ENCODE measurements at regions of chr1 and their contacts with region 1.

Region 1: DNA sequence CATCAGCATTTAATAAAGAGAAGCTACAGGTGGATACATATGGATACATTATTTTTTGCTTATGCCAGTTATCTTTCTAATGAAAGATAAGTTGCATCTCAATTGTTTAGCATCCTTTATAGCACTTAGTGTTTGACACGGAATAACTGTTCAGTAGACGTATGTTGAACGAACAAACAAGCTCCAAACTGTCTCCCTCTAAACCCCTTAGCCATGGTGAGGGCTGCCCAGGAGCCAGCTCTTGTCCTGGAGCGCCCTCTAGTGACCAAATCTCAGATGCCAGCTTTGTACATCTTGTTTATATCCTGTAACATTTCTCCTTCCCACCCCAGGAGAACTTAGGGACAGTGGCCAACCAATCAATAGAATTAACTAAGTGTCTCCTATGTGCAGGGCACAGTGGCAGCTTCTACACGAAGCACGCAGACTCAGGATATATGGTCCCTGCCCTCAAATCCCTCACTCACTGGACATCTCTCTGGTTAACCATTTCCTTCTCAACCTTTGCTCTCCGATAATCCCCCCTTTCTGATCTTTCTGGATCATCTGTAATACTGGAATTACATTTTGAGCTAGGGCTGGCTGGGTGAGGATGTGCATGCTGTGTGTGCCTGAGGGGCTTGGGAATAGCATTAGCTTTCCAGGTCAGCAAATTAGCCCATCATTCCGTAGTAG is 22.9 kb downstream of the KCNA10 start:
- DNase-seq: peak; percentile 68
- ATAC-seq: peak; percentile 94
- H3K4me3 ChIP-seq: no peak overlapping the region
- H3K27ac ChIP-seq: no peak overlapping the region
- H3K4me1 ChIP-seq: no peaks in the 10 kb centered on the region; a peak in 1 of 4 replicates
- H3K27me3 ChIP-seq: no peaks in the 10 kb centered on the region
- CTCF ChIP-seq: peak; percentile 87 to 97 (median 95)
- POLR2A ChIP-seq: no peak
- RAD21 ChIP-seq: peak; percentile 99

Region 2: GRCh38 chr1:110196917-110197765 is 298.9 kb before region 1 on chr1:
- CTCF ChIA-PET with region 1: interaction called, 23 read pairs
- POLR2A ChIA-PET with region 1: no interaction called
- RAD21 ChIA-PET with region 1: interaction called, 5 to 8 read pairs
- intact Hi-C with region 1: no loop called
- DNase-seq: peak; percentile 38
- ATAC-seq: peak; percentile 96
- H3K4me3 ChIP-seq: no peak overlapping the region
- H3K27ac ChIP-seq: no peak overlapping the region
- H3K4me1 ChIP-seq: peaks cover 0 to 6% of the 10 kb centered on the region in 2 experiments; a peak in 1 of 4 replicates
- H3K27me3 ChIP-seq: no peaks in the 10 kb centered on the region
- CTCF ChIP-seq: peak; percentile 69 to 95 (median 93)
- POLR2A ChIP-seq: no peak
- RAD21 ChIP-seq: peak; percentile 70

Region 3: DNA sequence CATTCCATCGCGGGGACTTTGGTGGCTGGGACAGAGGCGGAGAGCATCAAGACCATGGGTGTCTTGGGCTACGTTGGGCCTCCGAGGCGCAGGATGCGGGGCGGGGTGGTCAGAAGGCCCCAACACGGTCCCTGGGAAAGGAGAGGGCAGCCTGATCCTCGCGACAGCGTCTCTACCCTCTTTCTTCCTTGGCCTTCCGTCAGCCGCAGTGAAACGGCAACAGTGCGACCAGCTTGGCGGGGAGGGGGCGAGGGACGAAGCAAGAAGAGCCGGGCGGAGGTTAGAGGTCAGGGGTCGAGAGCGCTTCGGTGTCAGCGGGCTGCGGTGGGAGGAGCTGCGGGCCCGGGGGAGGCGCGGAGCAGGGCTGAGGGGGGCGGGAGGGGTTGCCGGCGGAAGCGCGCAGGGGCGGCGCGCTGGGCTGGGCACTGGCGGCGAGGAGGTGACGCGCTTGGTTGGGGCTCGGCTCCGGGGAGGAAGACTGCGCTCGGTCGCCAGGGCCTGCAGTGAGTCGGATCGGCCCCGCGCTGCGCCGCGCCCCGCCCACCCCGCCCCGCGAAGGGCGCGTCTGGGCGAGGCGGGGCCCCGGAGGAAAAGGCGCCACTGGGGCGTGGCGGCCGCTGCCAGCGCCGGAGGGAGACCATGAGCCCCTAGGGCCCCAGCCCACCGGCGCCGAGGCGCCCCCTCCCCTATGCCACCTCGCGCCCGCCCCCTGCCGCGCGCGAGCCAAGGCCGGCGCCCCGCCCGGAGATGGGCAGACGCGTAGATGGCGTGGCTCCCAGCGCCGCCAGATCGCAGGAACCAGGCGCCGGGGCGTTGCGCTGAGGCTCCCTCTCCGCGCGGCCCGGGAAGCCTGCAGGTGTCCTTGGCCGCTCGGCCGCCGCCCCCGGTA is 286.1 kb before region 1 on chr1 and contains the start of gene KCNC4:
- CTCF ChIA-PET with region 1: interaction called, 91 read pairs
- POLR2A ChIA-PET with region 1: interaction called, 9 read pairs
- RAD21 ChIA-PET with region 1: interaction called, 14 to 17 read pairs
- intact Hi-C with region 1: loop called (anchors 1 kb)
- DNase-seq: peak; percentile 56
- ATAC-seq: peak; percentile 90
- H3K4me3 ChIP-seq: peak within 1 kb of the TSS; percentile 57 to 74
- H3K27ac ChIP-seq: peak within 1 kb of the TSS; percentile 83
- H3K4me1 ChIP-seq: peaks cover 0 to 23% of the 10 kb centered on the region in 2 experiments; a peak in 2 of 4 replicates
- H3K27me3 ChIP-seq: no peaks in the 10 kb centered on the region
- CTCF ChIP-seq: no peak
- POLR2A ChIP-seq: no peak
- RAD21 ChIP-seq: no peak
- total RNA-seq, gene KCNC4: 13.0 TPM

Region 4: DNA sequence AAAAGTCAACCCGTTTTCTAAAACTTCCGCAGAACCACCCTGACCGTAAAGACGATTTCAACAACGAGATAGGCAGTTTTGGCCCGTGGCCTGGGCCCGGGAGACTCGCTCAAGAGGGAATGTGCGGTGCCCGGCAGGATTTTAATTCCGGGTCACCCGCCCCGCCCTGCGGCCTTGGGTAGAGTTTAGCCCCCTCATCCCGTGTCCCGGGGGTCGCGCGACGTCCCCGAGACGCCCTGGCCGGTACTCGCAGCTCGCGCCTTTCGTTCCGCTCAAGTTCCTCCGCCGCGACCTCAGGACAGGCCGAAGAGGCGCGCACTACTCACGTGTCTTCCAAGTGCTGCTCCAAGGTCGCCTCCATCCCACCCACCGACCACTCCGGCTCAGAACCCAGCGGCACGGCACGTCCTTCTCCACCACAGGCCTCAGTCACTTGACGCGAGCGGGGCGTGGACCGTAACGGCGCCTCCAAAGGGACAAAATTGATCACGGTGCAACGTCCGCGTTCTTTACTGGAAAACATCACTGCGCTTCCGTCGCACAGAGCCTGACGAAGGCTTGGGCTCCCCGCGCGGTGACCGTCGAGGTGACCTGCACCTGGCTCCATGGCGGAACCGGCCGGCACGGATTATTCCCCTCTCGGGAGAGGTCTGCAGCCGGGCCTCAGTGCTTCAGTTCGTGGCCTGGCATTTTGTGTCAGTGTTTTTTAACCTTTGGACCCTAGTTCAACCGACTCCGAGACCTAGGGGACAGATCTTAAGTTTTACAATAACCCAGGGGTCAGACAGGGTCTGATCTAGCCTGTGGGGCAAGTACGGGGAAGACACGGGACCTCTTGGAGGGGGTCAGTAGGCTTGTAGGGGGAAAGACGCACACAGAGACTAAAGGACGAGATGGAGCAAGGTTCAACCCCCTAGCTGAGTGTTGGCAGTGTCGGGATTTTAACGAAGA is 88.5 kb before region 1 on chr1 and contains the start of gene LAMTOR5:
- CTCF ChIA-PET with region 1: interaction called, 22 read pairs
- POLR2A ChIA-PET with region 1: interaction called, 5 read pairs
- RAD21 ChIA-PET with region 1: interaction called, 3 to 4 read pairs
- intact Hi-C with region 1: loop called (anchors 1 kb)
- DNase-seq: peak; percentile 93
- ATAC-seq: peak; percentile 89
- H3K4me3 ChIP-seq: peak within 1 kb of the TSS; percentile 96 to 98
- H3K27ac ChIP-seq: peak within 1 kb of the TSS; percentile 80
- H3K4me1 ChIP-seq: peaks cover 4 to 14% of the 10 kb centered on the region in 2 experiments; a peak in 3 of 4 replicates
- H3K27me3 ChIP-seq: no peaks in the 10 kb centered on the region
- CTCF ChIP-seq: no peak
- POLR2A ChIP-seq: peak; percentile 63
- RAD21 ChIP-seq: no peak
- total RNA-seq, gene LAMTOR5: 137 TPM

Region 5: GRCh38 chr1:110471163-110471562 is 24.9 kb before region 1 on chr1:
- CTCF ChIA-PET with region 1: interaction called, 203 read pairs
- POLR2A ChIA-PET with region 1: no interaction called
- RAD21 ChIA-PET with region 1: interaction called, 8 to 11 read pairs
- intact Hi-C with region 1: loop called (anchors 1 kb)
- DNase-seq: peak; percentile 63
- ATAC-seq: peak; percentile 79
- H3K4me3 ChIP-seq: no peak overlapping the region
- H3K27ac ChIP-seq: no peak overlapping the region
- H3K4me1 ChIP-seq: peaks cover 4 to 19% of the 10 kb centered on the region in 2 experiments
- H3K27me3 ChIP-seq: no peaks in the 10 kb centered on the region
- CTCF ChIP-seq: peak; percentile 28 to 47 (median 45); a peak in 5 of 6 replicates
- POLR2A ChIP-seq: no peak
- RAD21 ChIP-seq: peak; percentile 47

Region 6: DNA sequence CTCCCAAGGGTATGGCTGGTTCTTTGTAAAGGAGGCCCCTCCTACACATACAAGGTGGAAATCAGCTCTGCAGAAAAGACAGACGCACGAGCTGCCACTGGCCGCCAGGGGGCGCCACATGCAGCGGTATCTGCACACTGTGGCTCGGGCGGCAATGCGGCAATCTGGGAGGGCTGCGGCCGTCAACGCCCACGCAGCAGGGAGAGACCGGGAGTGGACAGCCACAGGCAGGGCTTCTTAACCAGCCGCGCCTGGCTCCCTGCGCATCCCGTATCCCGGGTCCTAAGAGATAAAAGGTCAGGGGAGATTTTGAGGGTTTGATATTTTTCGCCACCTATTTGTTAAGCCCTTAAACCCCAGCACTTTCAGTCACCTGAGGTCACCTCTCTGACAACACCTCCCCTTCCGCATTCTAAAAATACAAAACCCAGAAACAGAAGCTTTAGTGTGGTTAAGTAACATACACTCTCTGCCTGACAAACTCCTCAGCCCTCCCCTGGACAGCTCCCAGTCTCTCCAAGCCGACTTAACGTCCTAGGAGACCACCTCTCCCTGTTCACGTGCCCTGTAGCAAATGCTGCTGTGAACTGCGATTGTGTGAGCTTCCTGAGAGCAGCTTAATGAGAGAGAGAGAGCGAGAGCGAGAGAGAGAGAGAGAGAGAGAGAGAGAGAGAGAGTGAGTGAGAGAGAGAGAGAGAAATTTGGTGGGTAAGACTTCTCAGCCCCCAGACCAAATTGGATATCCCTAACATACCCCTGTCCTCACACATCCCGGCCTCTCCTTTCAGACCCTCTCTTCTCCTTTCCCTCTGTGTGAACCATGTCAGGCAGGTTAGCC is 123.6 kb after region 1 on chr1:
- CTCF ChIA-PET with region 1: interaction called, 10 read pairs
- POLR2A ChIA-PET with region 1: no interaction called
- RAD21 ChIA-PET with region 1: no interaction called
- intact Hi-C with region 1: no loop called
- DNase-seq: peak; percentile 63
- ATAC-seq: peak; percentile 88
- H3K4me3 ChIP-seq: no peak overlapping the region
- H3K27ac ChIP-seq: no peak overlapping the region
- H3K4me1 ChIP-seq: peaks cover 8 to 22% of the 10 kb centered on the region in 2 experiments
- H3K27me3 ChIP-seq: peaks cover 22% of the 10 kb centered on the region
- CTCF ChIP-seq: peak; percentile 80 to 98 (median 93); a peak in 5 of 6 replicates
- POLR2A ChIP-seq: no peak
- RAD21 ChIP-seq: peak; percentile 76